GM10248 (cell line): ENCODE measurements at regions of chr5 and their contacts with region 1.

Region 1: GRCh38 chr5:67315082-67315989 is 118.7 kb upstream of the CD180 start:
- DNase-seq: no peak
- CTCF ChIP-seq: no peak

Region 2: DNA sequence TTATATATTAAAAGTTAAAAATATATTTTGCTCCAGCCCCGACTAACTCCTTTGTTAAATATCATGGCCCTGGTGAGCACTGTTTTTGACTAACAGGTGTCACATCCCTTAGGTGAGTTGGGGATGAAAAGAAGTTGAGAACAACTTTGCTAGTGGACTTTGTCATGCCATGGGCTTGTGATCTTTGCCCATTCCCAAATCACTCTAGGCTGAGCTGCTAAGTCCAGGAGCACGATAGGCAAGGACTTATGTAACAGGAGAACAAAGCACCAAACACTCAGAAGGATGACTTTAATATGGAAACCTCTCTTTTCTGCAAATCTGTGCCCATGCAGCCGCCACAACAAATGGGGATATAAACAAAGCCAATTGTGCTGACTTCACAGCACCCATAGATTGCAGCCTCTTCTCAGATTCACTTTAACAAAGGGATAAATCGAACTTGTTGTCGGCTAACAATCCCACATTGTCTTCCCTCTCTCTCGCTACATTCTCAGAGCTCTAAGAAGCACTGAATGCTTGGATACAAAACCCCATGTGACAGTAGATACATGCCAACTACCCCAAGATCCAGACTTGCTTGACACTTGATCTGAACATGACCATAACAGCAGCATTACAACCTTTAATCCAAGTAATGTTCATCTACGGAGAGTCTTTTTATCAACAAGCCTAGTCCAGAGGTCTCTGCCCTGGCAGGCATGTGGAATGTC is 31.9 kb before region 1 on chr5:
- CTCF ChIA-PET with region 1: interaction called, 10 read pairs
- POLR2A ChIA-PET with region 1: no interaction called
- DNase-seq: no peak
- CTCF ChIP-seq: no peak